ENCODE measurements at regions of chr6 and their contacts with region 1.

Region 1: GRCh38 chr6:30914076-30914853 is at the start of gene VARS2:
- DNase-seq: peak; percentile 89 to 97 (median 96)
- ATAC-seq: peak; percentile 97
- H3K4me3 ChIP-seq: peak within 1 kb of the TSS; percentile 37
- H3K27ac ChIP-seq: peak within 1 kb of the TSS; percentile 76
- H3K4me1 ChIP-seq: peaks cover 2% of the 10 kb centered on the region
- H3K27me3 ChIP-seq: no peaks in the 10 kb centered on the region
- total RNA-seq, gene VARS2: 14.8 to 20.8 (median 16.9) TPM

Region 2: DNA sequence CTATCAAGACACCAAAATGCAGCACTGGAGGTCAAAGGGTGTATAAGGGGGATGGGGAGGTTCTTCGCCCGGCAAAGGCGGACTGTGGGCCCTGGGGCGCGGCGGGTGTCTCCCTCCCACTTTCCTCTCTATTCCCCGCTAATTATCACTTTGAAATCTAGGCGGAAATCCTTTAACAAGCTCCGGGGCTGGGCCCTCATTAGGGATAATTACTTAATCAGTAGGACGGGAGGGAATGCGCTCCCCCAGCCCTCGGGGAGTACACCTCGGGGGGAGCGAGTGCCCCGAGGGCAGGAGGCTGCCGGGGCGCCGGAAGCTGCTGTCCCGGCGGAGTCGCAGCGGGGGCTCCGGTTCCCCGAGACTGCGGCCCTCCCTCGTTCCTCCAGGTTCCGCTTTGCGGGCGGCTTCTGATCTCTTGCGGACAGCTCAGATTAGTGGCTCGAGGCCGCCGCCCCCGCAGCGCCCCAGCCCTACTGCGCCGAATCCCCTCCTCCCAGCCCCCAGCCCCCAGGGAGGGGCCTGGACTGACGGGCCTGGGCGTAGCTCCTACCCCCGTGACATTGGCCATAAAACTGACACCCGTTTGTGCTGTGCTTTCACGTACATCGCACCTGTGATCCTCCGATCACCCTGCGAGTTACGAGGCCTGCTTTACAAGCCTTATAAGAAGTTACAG is 41.2 kb after region 1 on chr6:
- intact Hi-C with region 1: no loop called
- DNase-seq: peak; percentile 80 to 88 (median 85)
- ATAC-seq: peak; percentile 86 to 94
- H3K4me3 ChIP-seq: peak overlapping the region; percentile 51
- H3K27ac ChIP-seq: no peak overlapping the region
- H3K4me1 ChIP-seq: no peaks in the 10 kb centered on the region
- H3K27me3 ChIP-seq: no peaks in the 10 kb centered on the region

Region 3: DNA sequence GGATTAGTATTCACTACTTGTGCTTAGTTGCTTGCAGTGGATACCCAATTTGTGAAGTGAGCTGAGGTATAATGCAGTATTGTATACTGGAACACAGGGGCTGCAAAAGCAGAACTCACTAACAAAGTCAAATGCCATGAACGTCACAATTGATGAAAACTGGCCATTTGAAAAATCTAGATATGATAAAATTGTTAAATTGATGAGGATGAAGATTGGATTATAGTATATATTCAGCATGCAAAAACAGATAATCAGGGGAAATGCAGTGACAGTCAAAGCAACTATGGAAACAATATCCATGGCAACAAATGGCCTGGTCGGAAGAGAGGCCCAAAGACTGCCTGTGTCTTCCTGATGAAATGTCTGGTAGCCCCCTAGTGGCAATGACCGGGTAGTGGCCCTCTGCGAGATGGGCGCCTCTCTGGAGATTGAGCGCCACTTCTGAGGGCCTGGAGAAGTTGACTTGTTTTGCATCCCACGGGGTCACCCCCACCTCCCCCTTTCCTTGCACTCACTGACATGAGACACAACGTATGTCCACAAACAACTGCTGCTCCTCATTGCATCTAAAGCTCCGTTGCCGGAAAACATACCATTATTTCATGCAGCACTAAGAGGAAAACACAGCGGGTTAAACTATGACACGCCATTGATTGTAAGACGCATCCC is 154.5 kb after region 1 on chr6:
- intact Hi-C with region 1: loop called in 3 of 4 experiments (anchors 2 to 10 kb)
- DNase-seq: peak; percentile 74 to 91 (median 86)
- ATAC-seq: peak; percentile 87 to 92
- H3K4me3 ChIP-seq: no peak overlapping the region
- H3K27ac ChIP-seq: no peak overlapping the region
- H3K4me1 ChIP-seq: no peaks in the 10 kb centered on the region
- H3K27me3 ChIP-seq: no peaks in the 10 kb centered on the region

Region 4: DNA sequence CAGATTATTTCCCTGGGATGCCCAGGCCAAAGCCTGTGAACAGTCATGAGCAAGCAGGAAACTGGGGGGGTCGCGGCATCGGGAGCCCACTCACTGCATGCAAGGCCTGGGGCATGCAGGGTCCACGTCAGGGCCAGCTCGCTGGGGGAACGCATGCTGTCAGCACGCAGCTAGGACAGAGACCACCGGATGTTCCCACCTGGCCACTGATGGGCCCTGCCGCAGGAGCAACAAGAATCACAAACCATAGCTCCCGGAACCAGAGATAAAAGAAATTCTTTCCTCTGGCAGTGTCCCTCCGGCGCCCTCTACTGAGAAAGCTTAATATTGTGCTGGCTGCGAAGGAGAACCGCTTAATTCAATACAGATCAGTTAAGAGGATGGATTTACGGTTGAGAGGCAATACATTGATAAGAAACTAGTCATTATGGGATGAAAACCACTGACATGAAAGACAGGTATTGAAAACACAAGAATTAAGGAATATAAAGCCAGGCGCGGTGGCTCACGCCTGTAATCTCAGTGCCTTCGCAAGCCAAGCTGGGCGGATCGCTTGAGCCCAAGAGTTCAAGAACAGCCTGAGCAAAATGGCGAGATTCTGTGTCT is 165.5 kb after region 1 on chr6:
- intact Hi-C with region 1: loop called in 2 of 4 experiments (anchors 5 to 10 kb)
- DNase-seq: peak in 2 of 3 donors; percentile 35 to 82
- ATAC-seq: peak; percentile 73
- H3K4me3 ChIP-seq: no peak overlapping the region
- H3K27ac ChIP-seq: no peak overlapping the region
- H3K4me1 ChIP-seq: no peaks in the 10 kb centered on the region
- H3K27me3 ChIP-seq: no peaks in the 10 kb centered on the region

Measured in right cardiac atrium (tissue), 5 donors.